ENCODE measurements at regions of chr4 and their contacts with region 1.

Region 1: GRCh38 chr4:40672536-40673526 is 43.2 kb upstream of the RBM47 start:
- DNase-seq: peak; percentile 70
- ATAC-seq: peak; percentile 87
- H3K4me3 Mint-ChIP-seq: peak overlapping the region; percentile 57
- H3K27ac Mint-ChIP-seq: peak overlapping the region; percentile 93
- H3K4me1 Mint-ChIP-seq: peaks cover 63% of the 10 kb centered on the region
- H3K27me3 Mint-ChIP-seq: no peaks in the 10 kb centered on the region

Region 2: GRCh38 chr4:39609454-39609931 is 1063.3 kb before region 1 on chr4:
- CTCF ChIA-PET with region 1: no interaction called
- POLR2A ChIA-PET with region 1: no interaction called
- intact Hi-C with region 1: no loop called
- DNase-seq: no peak
- ATAC-seq: peak; percentile 76
- H3K4me3 Mint-ChIP-seq: no peak overlapping the region
- H3K27ac Mint-ChIP-seq: no peak overlapping the region
- H3K4me1 Mint-ChIP-seq: peaks cover 6% of the 10 kb centered on the region
- H3K27me3 Mint-ChIP-seq: no peaks in the 10 kb centered on the region

Region 3: GRCh38 chr4:40492691-40493090 is 180.1 kb before region 1 on chr4:
- CTCF ChIA-PET with region 1: no interaction called
- POLR2A ChIA-PET with region 1: no interaction called
- intact Hi-C with region 1: no loop called
- DNase-seq: no peak
- ATAC-seq: no peak
- H3K4me3 Mint-ChIP-seq: no peak overlapping the region
- H3K27ac Mint-ChIP-seq: no peak overlapping the region
- H3K4me1 Mint-ChIP-seq: peaks cover 2% of the 10 kb centered on the region
- H3K27me3 Mint-ChIP-seq: no peaks in the 10 kb centered on the region

Region 4: DNA sequence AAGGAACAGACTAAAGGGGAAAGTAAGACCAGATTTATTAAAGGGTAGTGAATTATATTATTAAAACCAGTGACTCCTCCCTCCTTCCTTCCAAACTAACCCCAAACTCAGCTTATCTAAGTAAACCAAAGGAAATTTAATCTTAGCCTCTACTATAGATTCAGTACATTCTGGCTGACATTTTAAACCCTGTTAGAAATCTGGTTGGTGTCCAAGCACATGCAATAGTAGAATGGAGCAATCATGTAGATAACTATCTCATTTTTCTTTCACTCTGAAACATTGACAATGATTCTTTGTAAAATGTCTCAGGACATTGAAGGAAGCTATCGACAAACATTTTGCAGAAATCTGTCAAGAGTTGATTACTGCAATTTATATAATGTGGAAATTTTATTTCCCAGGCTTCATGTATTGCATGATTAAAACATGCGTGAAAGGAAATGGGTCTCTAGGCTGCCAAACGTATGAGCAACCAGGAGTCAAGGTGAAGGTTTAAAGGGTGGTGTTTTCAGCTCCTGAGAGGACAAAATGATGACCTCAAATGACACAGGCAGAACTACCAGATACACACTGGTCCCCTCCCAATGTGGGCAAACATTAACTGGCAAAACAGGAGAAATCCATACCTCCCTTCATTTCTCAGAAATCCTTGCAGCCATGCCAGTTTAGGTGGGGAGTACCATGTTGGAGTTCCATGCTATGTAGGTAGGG is 15.0 kb after region 1 on chr4:
- CTCF ChIA-PET with region 1: interaction called, 10 read pairs
- POLR2A ChIA-PET with region 1: interaction called, 12 read pairs
- intact Hi-C with region 1: loop called (anchors 1 kb)
- DNase-seq: no peak
- ATAC-seq: peak; percentile 18
- H3K4me3 Mint-ChIP-seq: no peak overlapping the region
- H3K27ac Mint-ChIP-seq: peak overlapping the region; percentile 91
- H3K4me1 Mint-ChIP-seq: peaks cover 15% of the 10 kb centered on the region
- H3K27me3 Mint-ChIP-seq: peaks cover 1% of the 10 kb centered on the region

Region 5: DNA sequence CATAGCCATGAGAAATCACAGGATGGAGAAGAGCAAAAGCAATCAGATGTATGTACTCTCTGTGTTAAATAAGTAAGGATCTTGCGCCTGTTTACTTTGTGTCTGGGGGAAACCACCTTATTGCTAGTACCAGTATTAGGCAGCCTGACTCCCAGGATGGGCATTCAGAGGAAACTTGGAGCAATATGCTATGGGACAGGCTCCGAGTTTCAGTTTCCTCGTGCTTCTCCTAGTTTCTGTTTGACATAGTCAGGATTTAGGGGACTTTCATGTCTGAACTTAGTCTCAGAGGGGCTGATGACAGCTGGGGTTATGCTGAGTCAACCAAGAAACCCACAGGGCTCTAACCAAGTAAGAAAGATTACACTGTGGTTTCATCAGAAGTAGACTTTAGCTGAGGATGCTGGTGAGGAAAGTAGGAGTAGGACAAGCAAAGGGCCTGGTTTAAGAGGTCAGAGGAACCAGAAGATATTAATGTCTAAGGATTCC is 90.4 kb after region 1 on chr4:
- CTCF ChIA-PET with region 1: no interaction called
- POLR2A ChIA-PET with region 1: no interaction called
- intact Hi-C with region 1: loop called in 1 of 2 experiments (anchors 2 kb)
- DNase-seq: peak; percentile 76
- ATAC-seq: peak; percentile 93
- H3K4me3 Mint-ChIP-seq: no peak overlapping the region
- H3K27ac Mint-ChIP-seq: peak overlapping the region; percentile 47
- H3K4me1 Mint-ChIP-seq: peaks cover 12% of the 10 kb centered on the region
- H3K27me3 Mint-ChIP-seq: peaks cover 1% of the 10 kb centered on the region

Region 6: DNA sequence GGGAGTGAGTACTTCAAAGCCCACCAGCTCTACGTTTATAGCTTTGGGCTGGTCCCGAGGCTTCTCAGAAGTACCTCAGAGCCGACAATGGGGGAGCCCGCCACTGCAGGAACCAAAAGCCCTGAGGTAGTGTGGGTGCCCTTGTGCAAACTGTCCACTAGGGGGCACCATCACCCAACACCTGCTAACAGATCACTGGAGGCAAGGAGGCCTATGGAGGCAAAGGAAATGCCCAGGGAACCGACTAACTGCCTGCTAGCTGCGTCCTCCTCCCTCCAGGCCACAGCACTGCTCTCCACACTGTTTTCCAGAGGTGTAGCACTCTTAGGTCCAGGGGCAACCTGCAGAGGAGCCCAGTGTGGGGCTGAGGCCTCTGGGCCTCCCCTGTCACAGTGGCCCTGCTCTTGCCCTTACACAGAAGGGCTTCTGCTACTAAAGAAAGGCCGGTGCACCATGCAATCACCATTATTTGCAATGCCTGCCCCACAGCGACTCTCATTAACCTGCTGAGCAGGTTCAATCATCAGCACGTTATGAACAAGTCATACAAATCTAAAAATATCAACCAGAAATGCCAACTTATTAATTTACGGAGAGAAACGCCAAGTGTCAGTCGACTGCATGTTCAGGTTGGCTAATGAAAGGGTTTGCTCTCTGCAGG is 236.0 kb after region 1 on chr4:
- CTCF ChIA-PET with region 1: no interaction called
- POLR2A ChIA-PET with region 1: no interaction called
- intact Hi-C with region 1: loop called in 1 of 2 experiments (anchors 2 kb)
- DNase-seq: peak; percentile 90
- ATAC-seq: peak; percentile 85
- H3K4me3 Mint-ChIP-seq: peak overlapping the region; percentile 26
- H3K27ac Mint-ChIP-seq: peak overlapping the region; percentile 95
- H3K4me1 Mint-ChIP-seq: peaks cover 36% of the 10 kb centered on the region
- H3K27me3 Mint-ChIP-seq: no peaks in the 10 kb centered on the region